Right cardiac atrium (tissue), 5 donors: ENCODE measurements at regions of chr1 and their contacts with region 1.

Region 1: GRCh38 chr1:201254625-201255506 is 28.4 kb upstream of the PKP1 start:
- DNase-seq: peak; percentile 49 to 87 (median 84)
- ATAC-seq: peak; percentile 71 to 73
- H3K4me3 ChIP-seq: no peak overlapping the region
- H3K27ac ChIP-seq: no peak overlapping the region
- H3K4me1 ChIP-seq: no peaks in the 10 kb centered on the region
- H3K27me3 ChIP-seq: no peaks in the 10 kb centered on the region

Region 2: DNA sequence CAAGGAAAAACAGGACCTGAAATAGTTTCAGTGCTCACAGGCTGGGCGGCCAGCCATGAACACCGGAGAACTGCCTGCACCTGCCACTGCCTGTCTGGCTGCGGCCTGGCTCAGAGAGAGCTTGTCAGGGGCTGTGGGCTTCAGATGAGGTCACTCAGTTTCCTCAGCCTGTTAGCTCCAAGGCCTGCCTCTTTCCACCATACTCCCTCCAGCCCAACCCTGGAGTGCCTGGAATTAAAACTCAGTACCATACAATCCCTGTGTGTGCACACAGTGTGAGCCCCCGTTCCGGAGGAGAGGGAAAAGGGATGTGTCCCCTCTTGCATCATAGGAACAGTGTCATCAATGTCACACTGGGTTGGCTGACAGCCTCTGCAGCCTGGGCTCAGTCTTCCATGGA is 158.8 kb before region 1 on chr1:
- intact Hi-C with region 1: no loop called
- DNase-seq: no peak
- ATAC-seq: no peak
- H3K4me3 ChIP-seq: no peak overlapping the region
- H3K27ac ChIP-seq: no peak overlapping the region
- H3K4me1 ChIP-seq: no peaks in the 10 kb centered on the region
- H3K27me3 ChIP-seq: no peaks in the 10 kb centered on the region

Region 3: DNA sequence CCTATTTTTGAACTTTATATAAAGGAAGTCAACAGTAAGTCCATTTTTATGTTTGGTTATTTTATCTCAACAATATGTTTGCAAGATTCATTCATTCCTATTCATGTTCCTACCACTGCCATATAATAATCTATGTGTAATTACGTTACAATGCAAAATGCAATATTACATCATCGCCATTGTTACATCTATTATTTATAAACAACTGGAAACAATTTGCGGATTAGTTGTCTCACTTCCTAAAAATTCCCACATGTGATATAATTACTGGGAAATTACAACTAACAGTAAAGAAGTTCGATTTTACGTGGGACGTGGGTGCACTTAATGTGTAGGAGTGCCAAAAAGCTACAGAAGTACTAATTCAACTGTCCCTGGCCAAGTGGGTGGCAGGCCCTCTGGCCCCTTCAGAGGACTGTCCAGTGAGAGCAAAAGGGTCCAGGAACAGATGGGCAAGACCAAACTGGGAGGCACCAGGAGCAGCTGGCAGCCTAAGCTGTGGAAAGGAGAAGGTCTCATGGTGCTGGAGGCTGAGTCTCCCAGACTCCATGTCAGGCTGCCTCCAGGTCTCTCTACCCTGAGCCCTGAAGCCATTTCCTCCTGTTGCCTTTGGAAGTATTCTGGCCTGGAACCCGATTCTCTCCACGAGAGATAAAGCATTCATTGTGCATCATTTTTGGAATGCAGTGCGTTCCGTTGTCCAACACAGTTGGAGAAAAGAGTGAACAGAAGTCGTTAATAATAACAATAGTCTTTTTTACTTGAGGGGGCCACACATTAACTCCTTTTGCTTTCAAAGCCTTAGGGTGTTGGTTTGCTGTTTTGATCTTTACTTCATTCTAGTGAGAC is 79.7 kb after region 1 on chr1:
- intact Hi-C with region 1: loop called in 1 of 4 experiments (anchors 5 kb)
- DNase-seq: no peak
- ATAC-seq: no peak
- H3K4me3 ChIP-seq: no peak overlapping the region
- H3K27ac ChIP-seq: no peak overlapping the region
- H3K4me1 ChIP-seq: peaks cover 2% of the 10 kb centered on the region
- H3K27me3 ChIP-seq: no peaks in the 10 kb centered on the region

Region 4: DNA sequence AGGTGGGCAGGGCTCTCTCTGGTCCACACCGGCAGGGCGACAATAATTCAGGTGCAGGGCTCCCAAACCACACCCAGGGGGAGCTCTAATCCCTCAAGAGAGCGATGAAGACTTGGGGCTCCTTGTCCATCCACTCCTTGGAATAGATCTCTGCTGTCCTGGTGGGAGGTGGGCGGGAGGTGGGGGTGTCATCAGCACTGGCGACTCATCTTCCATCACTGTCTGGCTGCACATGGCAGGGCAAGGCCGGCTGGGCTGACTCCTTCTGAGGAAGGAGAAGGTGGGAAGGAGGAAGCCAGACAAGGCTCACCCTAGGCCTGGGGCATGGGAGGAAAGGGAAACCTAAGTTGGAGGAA is 93.3 kb after region 1 on chr1:
- intact Hi-C with region 1: loop called in 2 of 4 experiments (anchors 5 kb)
- DNase-seq: peak in 1 of 3 donors; percentile 44
- ATAC-seq: peak; percentile 13 to 24
- H3K4me3 ChIP-seq: no peak overlapping the region
- H3K27ac ChIP-seq: no peak overlapping the region
- H3K4me1 ChIP-seq: peaks cover 2% of the 10 kb centered on the region
- H3K27me3 ChIP-seq: no peaks in the 10 kb centered on the region

Region 5: DNA sequence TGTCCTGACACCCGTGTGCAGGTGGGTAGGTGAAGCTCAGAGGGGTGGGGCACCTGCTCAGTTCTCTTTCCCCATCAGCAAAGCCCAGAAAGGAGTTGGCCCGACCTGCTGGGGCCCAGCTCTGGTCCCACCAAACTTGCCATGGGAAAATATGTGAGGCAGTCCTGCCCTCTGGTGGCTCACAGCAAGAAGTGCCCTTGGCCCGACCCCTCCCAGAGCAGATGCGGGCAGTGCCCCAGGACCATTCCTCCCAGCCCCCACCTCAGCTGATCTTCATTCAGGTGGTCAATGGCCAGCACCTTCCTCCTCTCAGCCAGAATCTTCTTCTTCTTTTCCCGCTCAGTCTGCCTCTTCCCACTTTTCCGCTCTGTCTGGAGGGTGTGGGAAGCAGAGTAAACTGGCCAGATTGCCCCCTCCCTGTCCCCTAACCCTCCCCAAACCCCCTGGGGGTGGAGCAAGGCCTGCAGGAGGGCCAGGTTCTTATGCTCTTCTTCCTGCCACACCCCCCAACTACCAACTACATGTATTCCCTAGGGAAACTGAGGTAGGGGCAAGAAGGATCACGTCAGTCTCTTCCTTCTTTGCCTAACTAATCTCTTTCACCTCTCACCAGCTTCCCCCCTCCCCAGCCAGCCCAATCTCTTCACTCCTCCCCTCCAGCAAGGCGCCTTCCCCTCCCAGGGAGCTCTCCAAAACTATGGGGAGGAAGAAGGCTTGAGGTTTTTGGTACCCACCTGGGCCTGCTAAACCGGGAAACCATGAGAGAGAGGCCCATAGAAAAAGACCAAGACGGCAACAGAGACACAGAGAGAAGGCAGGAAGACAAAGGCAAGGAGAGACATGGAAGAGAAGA is 107.0 kb after region 1 on chr1:
- intact Hi-C with region 1: loop called in 3 of 4 experiments (anchors 5 to 10 kb)
- DNase-seq: peak; percentile 46 to 73 (median 61)
- ATAC-seq: no peak
- H3K4me3 ChIP-seq: no peak overlapping the region
- H3K27ac ChIP-seq: peak overlapping the region; percentile 25
- H3K4me1 ChIP-seq: no peaks in the 10 kb centered on the region
- H3K27me3 ChIP-seq: no peaks in the 10 kb centered on the region

Region 6: GRCh38 chr1:201408176-201408833 is 153.4 kb after region 1 on chr1:
- intact Hi-C with region 1: loop called in 2 of 4 experiments (anchors 5 to 10 kb)
- DNase-seq: peak; percentile 75 to 92 (median 91)
- ATAC-seq: peak; percentile 74 to 75
- H3K4me3 ChIP-seq: no peak overlapping the region
- H3K27ac ChIP-seq: no peak overlapping the region
- H3K4me1 ChIP-seq: no peaks in the 10 kb centered on the region
- H3K27me3 ChIP-seq: no peaks in the 10 kb centered on the region